PC-9 (cell line): ENCODE measurements at regions of chr7 and their contacts with region 1.

Region 1: DNA sequence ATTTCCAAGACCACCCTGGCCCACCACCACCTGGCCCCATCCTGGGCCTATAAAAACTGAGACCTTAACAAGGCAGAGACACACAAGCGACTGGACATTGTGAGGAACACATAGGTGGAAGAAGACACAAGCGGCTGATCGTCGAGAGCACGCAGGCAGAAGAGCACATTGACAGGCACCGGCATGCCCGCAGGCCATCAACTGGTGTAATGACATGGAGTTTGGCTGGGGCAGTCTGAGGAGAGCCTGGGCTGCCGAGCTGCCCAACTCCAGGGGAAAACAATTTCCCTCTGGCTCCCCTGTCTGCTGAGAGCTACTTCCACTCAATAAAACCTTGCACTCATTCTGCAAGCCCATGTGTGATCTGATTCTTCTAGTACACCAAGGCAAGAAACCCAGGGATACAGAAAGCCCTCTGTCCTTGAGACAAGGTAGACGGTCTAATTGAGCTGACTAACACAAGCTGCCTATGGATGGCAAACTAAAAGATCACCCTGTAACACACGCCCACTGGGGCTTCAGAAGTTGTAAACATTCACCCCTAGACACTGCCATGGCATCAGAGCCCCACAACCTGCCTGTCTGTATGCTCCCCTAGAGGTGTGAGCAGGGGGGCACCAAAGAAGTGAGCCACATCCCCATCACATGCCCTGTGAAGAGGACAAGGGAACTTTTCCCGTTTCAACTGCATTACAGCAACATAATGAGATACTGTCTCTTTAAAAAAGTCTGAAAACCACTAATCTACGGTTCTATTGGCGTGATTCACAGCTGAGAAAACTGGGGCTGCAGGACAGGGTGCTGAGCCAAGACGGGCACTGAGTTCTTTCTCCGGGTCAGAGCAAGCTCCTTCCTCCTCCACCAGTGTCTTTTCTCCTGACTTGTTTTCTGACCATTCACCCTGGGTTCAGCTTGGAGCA is 18.5 kb upstream of the TNS3 start:
- DNase-seq: peak; percentile 70 to 88
- H3K4me3 ChIP-seq: peak overlapping the region; percentile 38; the same call in 1 of the 2 replicates
- H3K27ac ChIP-seq: peak overlapping the region; percentile 98
- H3K4me1 ChIP-seq: peaks cover 68% of the 10 kb centered on the region
- H3K27me3 ChIP-seq: no peaks in the 10 kb centered on the region
- CTCF ChIP-seq: no peak

Region 2: DNA sequence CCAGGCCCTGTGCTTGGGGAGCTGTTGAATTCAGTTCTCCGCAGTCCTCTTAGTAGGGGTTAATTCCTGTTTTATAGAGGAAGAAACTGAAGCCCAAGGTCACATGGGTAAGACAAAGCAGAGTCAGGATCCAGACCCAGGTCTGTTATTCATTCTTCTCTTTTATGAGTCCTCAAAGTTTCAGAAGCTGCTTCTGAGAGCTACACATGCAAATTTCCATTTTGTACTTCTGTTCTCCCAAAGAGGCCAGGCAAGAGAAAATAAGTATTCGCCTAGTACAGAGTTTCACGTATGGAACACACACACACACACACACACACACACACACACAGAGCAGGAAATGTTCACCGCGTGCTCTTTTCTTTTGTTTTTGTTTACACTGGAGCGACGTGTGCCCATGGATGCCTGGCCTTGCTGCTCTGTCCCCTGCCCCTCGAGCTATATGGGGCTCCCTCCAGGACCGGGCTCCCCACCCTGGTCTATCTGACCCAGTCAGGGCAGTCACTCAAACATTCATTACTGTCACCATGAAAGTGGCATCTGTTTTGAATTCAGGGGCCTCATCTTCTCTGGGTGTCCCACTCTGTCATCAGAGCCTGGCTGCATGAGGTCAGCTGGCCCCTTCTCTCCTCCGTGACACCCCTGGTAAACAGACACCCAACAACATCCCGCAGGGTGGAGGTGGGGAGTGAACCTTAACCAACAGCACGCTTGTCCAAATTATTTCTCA is 102.9 kb before region 1 on chr7:
- CTCF ChIA-PET with region 1: no interaction called
- POLR2A ChIA-PET with region 1: no interaction called
- intact Hi-C with region 1: no loop called
- DNase-seq: no peak
- H3K4me3 ChIP-seq: no peak overlapping the region
- H3K27ac ChIP-seq: no peak overlapping the region
- H3K4me1 ChIP-seq: peaks cover 26% of the 10 kb centered on the region
- H3K27me3 ChIP-seq: no peaks in the 10 kb centered on the region
- CTCF ChIP-seq: no peak

Region 3: GRCh38 chr7:47534322-47535034 is 66.0 kb before region 1 on chr7:
- CTCF ChIA-PET with region 1: no interaction called
- POLR2A ChIA-PET with region 1: no interaction called
- intact Hi-C with region 1: loop called (anchors 2 kb)
- DNase-seq: peak; percentile 76 to 89
- H3K4me3 ChIP-seq: no peak overlapping the region
- H3K27ac ChIP-seq: peak overlapping the region; percentile 52
- H3K4me1 ChIP-seq: peaks cover 84% of the 10 kb centered on the region
- H3K27me3 ChIP-seq: no peaks in the 10 kb centered on the region
- CTCF ChIP-seq: peak; percentile 62

Region 4: GRCh38 chr7:47647181-47647917 is 46.9 kb after region 1 on chr7:
- CTCF ChIA-PET with region 1: no interaction called
- POLR2A ChIA-PET with region 1: interaction called, 11 read pairs
- intact Hi-C with region 1: loop called (anchors 5 kb)
- DNase-seq: no peak
- H3K4me3 ChIP-seq: no peak overlapping the region
- H3K27ac ChIP-seq: no peak overlapping the region
- H3K4me1 ChIP-seq: peaks cover 29% of the 10 kb centered on the region
- H3K27me3 ChIP-seq: no peaks in the 10 kb centered on the region
- CTCF ChIP-seq: no peak

Region 5: GRCh38 chr7:47690902-47691558 is 90.6 kb after region 1 on chr7:
- CTCF ChIA-PET with region 1: no interaction called
- POLR2A ChIA-PET with region 1: interaction called, 13 read pairs
- intact Hi-C with region 1: loop called (anchors 1 kb)
- DNase-seq: peak; percentile 23 to 65
- H3K4me3 ChIP-seq: no peak overlapping the region
- H3K27ac ChIP-seq: peak overlapping the region; percentile 78
- H3K4me1 ChIP-seq: peaks cover 51% of the 10 kb centered on the region
- H3K27me3 ChIP-seq: no peaks in the 10 kb centered on the region
- CTCF ChIP-seq: no peak

Region 6: DNA sequence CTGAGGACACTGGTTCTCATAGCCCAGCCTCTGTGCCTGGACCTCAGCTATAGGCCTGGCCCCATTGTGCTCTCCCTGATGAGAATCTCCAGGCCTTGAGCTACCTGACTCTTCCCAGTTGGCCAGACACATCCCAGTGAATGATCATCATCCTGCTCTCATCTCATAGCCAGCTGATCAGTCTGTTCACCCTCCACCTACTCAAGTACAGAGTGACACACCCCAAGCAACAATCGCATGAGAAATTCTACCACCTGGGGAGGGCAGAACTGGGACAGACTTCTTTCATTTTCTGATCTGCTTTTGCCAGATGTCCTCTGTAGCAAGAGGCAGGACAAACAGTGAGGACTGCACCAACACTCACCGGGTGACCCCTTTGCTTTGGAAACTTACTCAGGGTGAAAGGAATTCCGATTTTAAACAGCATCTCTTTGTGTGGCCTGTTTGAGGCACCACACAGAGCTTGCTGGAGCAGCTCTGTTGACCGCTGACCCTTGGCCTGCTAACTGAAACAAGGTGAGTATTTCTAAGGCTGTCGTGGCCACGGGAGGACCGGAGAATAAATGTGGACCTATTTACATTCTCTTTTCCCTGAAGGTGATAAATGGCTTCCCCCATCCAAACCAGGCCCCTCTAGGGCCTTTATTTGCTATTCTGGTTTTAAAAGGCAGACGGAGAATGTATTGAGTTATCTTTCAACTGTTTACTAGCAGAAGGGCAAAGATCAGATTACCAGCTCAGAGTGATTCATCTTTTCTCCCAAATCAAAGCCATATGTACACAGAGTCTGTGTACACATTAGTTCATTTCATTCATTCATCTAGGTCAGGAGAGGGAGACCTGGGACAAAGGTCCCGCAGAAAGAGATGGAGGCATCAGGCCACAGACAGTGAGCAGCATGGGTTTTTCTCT is 162.9 kb after region 1 on chr7:
- CTCF ChIA-PET with region 1: no interaction called
- POLR2A ChIA-PET with region 1: no interaction called
- intact Hi-C with region 1: loop called (anchors 1 kb)
- DNase-seq: peak; percentile 82 to 100
- H3K4me3 ChIP-seq: peak overlapping the region; percentile 5; the same call in 1 of the 2 replicates
- H3K27ac ChIP-seq: peak overlapping the region; percentile 95
- H3K4me1 ChIP-seq: peaks cover 69% of the 10 kb centered on the region
- H3K27me3 ChIP-seq: no peaks in the 10 kb centered on the region
- CTCF ChIP-seq: no peak

Region 7: DNA sequence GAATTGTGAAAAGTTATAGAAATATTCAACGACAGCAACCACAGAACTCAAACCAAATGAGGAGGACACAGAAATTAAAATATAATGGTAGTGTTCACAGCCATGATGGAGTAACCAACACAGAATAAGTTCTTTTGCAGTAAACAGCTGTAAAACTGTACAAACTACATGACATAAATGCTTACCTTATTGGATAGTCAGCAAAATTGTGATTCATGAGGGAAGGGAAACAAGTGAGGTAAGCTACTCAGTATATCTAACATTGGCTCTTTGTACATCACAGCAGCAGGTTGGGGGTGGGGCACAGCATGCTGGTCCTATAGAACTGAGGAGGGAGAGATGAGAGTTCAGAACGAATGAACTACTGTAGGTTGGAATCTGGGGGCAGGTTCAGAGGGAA is 1410.3 kb after region 1 on chr7:
- CTCF ChIA-PET with region 1: no interaction called
- POLR2A ChIA-PET with region 1: no interaction called
- intact Hi-C with region 1: no loop called
- DNase-seq: no peak
- H3K4me3 ChIP-seq: no peak overlapping the region
- H3K27ac ChIP-seq: no peak overlapping the region
- H3K4me1 ChIP-seq: no peaks in the 10 kb centered on the region
- H3K27me3 ChIP-seq: no peaks in the 10 kb centered on the region
- CTCF ChIP-seq: no peak